Ovary (tissue), 10 donors: ENCODE measurements at regions of chr5 and their contacts with region 1.

Region 1: DNA sequence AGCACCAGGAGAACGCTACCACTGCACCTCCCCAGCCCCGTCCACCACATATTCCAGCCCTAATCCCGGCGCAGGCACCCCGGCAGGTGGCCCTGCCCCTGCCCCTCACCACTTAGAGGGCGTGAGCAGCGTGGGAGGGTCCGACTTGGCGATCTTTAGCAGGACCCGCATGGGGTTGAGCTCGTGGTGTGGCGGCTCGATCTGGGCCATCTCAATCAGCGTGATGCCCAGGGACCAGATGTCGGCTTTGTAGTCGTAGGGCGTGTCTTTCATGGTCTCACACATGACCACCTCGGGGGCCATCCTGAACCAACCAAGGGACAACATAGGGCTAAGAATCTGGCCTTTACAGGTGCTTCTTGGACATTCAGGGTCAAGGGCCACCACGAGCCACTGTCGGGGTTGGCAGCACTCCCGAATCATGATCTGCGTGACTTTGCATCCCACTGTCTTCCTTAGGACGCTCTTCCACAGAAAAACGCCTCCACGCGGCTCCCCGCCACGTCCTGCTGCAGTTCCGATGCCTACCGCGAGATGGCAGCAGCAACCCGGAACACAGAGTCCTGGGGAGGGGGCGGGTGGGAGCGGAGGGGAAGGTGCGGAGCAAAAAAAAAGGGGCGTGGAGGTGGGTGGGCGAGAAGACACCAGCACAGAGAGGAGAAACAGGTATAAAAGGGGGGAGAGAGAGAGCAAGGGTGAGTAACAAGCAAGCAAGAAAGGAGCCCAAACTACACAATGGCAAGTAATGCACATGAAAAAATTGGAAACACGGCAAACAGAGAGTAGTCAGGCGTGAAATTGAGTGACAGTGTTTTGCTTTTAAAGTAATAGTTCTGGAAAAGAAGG is 81.3 kb downstream of the STK10 start:
- DNase-seq: peak; percentile 51 to 84 (median 75)
- H3K4me3 ChIP-seq: no peak overlapping the region
- H3K27ac ChIP-seq: no peak overlapping the region
- H3K4me1 ChIP-seq: peaks cover 6% of the 10 kb centered on the region
- H3K27me3 ChIP-seq: no peaks in the 10 kb centered on the region
- CTCF ChIP-seq: peak; percentile 62 to 75 (median 75)
- EP300 ChIP-seq: no peak
- POLR2A ChIP-seq: no peak

Region 2: DNA sequence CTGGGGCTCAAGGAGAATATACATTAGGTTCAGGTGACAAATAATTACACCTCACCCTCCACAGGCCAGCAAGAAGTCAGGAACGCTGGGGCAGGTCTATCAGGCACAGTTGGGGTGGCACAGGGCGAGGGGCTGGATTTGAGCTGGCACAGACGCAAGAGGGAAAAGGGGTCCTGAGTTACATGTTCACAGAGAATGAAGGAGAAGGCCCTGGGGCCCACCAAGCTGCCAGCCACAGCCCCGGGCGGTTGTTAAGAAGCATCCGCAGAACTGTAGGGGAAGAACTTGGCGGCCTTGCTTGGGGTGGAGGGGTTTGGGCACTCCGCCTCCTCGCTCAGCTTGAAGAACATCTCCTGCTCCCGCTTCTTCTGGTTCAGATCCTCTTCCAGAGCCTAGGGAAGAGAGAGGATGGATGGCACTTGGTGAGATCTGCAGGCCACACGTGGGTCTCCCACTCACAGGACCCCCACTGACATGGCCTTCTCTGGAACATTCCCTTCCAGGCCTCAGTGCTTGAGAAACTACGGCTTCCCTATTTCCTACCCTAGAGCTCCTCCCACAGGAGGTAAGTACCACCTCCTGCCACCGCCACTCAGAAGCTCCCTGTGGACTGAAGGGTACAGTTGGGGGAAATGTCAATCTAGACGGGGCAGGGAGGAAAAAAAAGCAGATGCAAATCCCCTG is 62.0 kb before region 1 on chr5:
- intact Hi-C with region 1: no loop called
- DNase-seq: no peak
- H3K4me3 ChIP-seq: no peak overlapping the region
- H3K27ac ChIP-seq: no peak overlapping the region
- H3K4me1 ChIP-seq: peaks cover 4% of the 10 kb centered on the region
- H3K27me3 ChIP-seq: no peaks in the 10 kb centered on the region
- CTCF ChIP-seq: no peak
- EP300 ChIP-seq: no peak
- POLR2A ChIP-seq: no peak

Region 3: GRCh38 chr5:172175263-172175719 is 68.6 kb after region 1 on chr5:
- intact Hi-C with region 1: no loop called
- DNase-seq: no peak
- H3K4me3 ChIP-seq: no peak overlapping the region
- H3K27ac ChIP-seq: no peak overlapping the region
- H3K4me1 ChIP-seq: no peaks in the 10 kb centered on the region
- H3K27me3 ChIP-seq: no peaks in the 10 kb centered on the region
- CTCF ChIP-seq: no peak
- EP300 ChIP-seq: no peak
- POLR2A ChIP-seq: no peak

Region 4: GRCh38 chr5:172188033-172188892 is 81.5 kb after region 1 on chr5 and contains the start of gene STK10:
- intact Hi-C with region 1: loop called (anchors 2 to 5 kb)
- DNase-seq: peak; percentile 85 to 91 (median 89)
- H3K4me3 ChIP-seq: peak within 1 kb of the TSS; percentile 91
- H3K27ac ChIP-seq: peak within 1 kb of the TSS; percentile 70 to 73
- H3K4me1 ChIP-seq: no peaks in the 10 kb centered on the region
- H3K27me3 ChIP-seq: no peaks in the 10 kb centered on the region
- CTCF ChIP-seq: peak; percentile 40 to 80 (median 74)
- EP300 ChIP-seq: no peak
- POLR2A ChIP-seq: no peak
- total RNA-seq, gene STK10: 7.6 to 15.5 (median 10.0) TPM

Region 5: DNA sequence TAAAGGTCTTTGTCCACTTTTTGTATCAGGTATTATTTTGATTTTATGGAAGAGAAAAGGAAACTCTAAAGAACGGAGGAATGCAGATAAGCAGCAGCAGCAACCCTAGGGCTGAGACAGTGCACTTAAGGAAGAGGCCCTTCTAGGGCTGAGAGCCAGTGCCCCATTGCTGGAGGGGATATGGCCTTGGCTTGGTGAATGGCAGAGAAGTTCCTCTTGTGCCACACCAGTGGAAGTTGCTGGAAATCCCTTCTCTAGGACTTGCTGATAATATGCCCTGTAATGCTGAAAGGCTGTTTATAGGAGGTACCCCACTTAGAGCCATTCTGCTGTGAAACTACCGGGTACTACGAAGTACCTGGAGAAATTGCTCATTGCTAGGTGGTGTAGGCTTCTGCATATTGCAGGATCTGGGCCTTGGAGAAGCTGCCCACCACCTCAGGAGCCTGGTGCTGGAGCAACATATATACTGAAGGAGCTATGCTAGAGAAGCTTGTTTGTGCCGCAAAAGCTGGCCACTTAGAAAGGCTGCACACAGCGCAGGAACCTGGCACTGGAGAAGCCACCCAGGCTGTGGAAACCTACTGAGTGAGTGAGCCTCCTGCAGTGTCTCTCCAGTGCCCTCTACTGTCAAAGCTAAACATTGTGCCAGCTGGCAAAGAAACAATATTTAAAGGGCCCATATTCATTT is 186.5 kb after region 1 on chr5:
- intact Hi-C with region 1: loop called in 3 of 4 experiments (anchors 5 to 10 kb)
- DNase-seq: peak; percentile 46 to 58 (median 56)
- H3K4me3 ChIP-seq: no peak overlapping the region
- H3K27ac ChIP-seq: no peak overlapping the region
- H3K4me1 ChIP-seq: no peaks in the 10 kb centered on the region
- H3K27me3 ChIP-seq: no peaks in the 10 kb centered on the region
- CTCF ChIP-seq: peak; percentile 50 to 64 (median 55)
- EP300 ChIP-seq: no peak
- POLR2A ChIP-seq: no peak

Region 6: GRCh38 chr5:172443441-172444109 is 336.8 kb after region 1 on chr5:
- intact Hi-C with region 1: loop called in 1 of 4 experiments (anchors 10 kb)
- DNase-seq: peak; percentile 89 to 93 (median 92)
- H3K4me3 ChIP-seq: no peak overlapping the region
- H3K27ac ChIP-seq: peak overlapping the region; percentile 31 to 69
- H3K4me1 ChIP-seq: peaks cover 26% of the 10 kb centered on the region
- H3K27me3 ChIP-seq: no peaks in the 10 kb centered on the region
- CTCF ChIP-seq: no peak
- EP300 ChIP-seq: peak; percentile 64
- POLR2A ChIP-seq: no peak

Region 7: GRCh38 chr5:172697123-172698121 is 590.7 kb after region 1 on chr5:
- intact Hi-C with region 1: loop called in 1 of 4 experiments (anchors 5 kb)
- DNase-seq: peak; percentile 88 to 94 (median 91)
- H3K4me3 ChIP-seq: peak overlapping the region; percentile 48
- H3K27ac ChIP-seq: peak overlapping the region; percentile 5 to 61
- H3K4me1 ChIP-seq: peaks cover 28% of the 10 kb centered on the region
- H3K27me3 ChIP-seq: no peaks in the 10 kb centered on the region
- CTCF ChIP-seq: peak; percentile 83 to 94 (median 94)
- EP300 ChIP-seq: no peak
- POLR2A ChIP-seq: peak; percentile 40

Region 8: GRCh38 chr5:172958331-172959046 is 851.8 kb after region 1 on chr5:
- intact Hi-C with region 1: loop called in 1 of 4 experiments (anchors 5 kb)
- DNase-seq: peak; percentile 62 to 79 (median 74)
- H3K4me3 ChIP-seq: peak overlapping the region; percentile 88
- H3K27ac ChIP-seq: peak overlapping the region in 1 of 2 donors; percentile 73
- H3K4me1 ChIP-seq: peaks cover 10% of the 10 kb centered on the region
- H3K27me3 ChIP-seq: no peaks in the 10 kb centered on the region
- CTCF ChIP-seq: no peak
- EP300 ChIP-seq: no peak
- POLR2A ChIP-seq: no peak